ENCODE measurements at regions of chr5 and their contacts with region 1.

Region 1: GRCh38 chr5:146049014-146049703 is 56.2 kb downstream of the PLAC8L1 start:
- DNase-seq: peak; percentile 91
- H3K4me3 Mint-ChIP-seq: no peak overlapping the region
- H3K27ac Mint-ChIP-seq: peak overlapping the region; percentile 4
- H3K4me1 Mint-ChIP-seq: peaks cover 31% of the 10 kb centered on the region
- H3K27me3 Mint-ChIP-seq: no peaks in the 10 kb centered on the region
- CTCF ChIP-seq: peak; percentile 90

Region 2: DNA sequence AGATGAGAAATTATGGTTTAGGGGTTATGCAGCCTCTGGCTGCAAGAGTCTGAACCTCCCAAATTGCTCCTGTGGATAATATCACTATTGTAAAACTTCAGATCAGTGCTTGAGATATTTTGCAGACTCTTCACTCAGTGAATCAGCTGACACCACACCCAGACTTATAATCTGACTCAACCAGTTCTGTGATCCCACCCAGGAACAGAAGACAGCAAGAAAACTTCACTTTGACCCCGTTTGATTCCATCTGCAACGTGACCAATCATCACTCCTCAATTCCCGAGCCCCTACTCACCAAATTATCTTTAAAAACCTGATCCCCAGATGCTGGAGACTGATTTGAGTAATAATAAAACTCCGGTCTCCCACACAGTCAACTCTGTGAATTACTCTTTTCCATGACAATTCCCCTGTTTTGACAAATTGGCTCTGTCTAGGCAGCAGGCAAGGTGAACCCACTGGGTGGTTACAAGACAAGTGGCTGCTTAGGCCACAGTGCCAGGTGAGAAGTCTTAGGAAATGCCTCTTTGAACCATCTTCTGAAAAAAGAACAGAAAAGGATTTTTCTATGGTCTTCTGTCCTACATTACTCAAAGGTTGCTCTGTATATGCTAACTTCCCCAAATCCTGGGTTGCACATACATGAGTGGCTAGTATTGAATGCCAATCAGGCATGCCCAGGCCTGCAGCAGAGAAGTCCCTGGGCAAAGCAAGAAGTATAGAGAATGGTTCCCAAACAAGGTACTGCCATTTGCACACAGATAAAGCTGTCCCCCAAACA is 802.0 kb before region 1 on chr5:
- CTCF ChIA-PET with region 1: no interaction called
- POLR2A ChIA-PET with region 1: no interaction called
- intact Hi-C with region 1: loop called (anchors 5 kb)
- DNase-seq: peak; percentile 70
- H3K4me3 Mint-ChIP-seq: no peak overlapping the region
- H3K27ac Mint-ChIP-seq: peak overlapping the region; percentile 78
- H3K4me1 Mint-ChIP-seq: peaks cover 42% of the 10 kb centered on the region
- H3K27me3 Mint-ChIP-seq: no peaks in the 10 kb centered on the region
- CTCF ChIP-seq: no peak

Region 3: GRCh38 chr5:145697251-145697990 is 351.7 kb before region 1 on chr5:
- CTCF ChIA-PET with region 1: interaction called, 5 read pairs
- POLR2A ChIA-PET with region 1: no interaction called
- intact Hi-C with region 1: loop called (anchors 1 kb)
- DNase-seq: peak; percentile 75
- H3K4me3 Mint-ChIP-seq: no peak overlapping the region
- H3K27ac Mint-ChIP-seq: no peak overlapping the region
- H3K4me1 Mint-ChIP-seq: no peaks in the 10 kb centered on the region
- H3K27me3 Mint-ChIP-seq: no peaks in the 10 kb centered on the region
- CTCF ChIP-seq: peak; percentile 68

Region 4: GRCh38 chr5:145908205-145908945 is 140.8 kb before region 1 on chr5:
- CTCF ChIA-PET with region 1: interaction called, 66 read pairs
- POLR2A ChIA-PET with region 1: interaction called, 4 read pairs
- intact Hi-C with region 1: loop called (anchors 1 kb)
- DNase-seq: peak; percentile 51
- H3K4me3 Mint-ChIP-seq: no peak overlapping the region
- H3K27ac Mint-ChIP-seq: no peak overlapping the region
- H3K4me1 Mint-ChIP-seq: peaks cover 5% of the 10 kb centered on the region
- H3K27me3 Mint-ChIP-seq: no peaks in the 10 kb centered on the region
- CTCF ChIP-seq: peak; percentile 62

Region 5: DNA sequence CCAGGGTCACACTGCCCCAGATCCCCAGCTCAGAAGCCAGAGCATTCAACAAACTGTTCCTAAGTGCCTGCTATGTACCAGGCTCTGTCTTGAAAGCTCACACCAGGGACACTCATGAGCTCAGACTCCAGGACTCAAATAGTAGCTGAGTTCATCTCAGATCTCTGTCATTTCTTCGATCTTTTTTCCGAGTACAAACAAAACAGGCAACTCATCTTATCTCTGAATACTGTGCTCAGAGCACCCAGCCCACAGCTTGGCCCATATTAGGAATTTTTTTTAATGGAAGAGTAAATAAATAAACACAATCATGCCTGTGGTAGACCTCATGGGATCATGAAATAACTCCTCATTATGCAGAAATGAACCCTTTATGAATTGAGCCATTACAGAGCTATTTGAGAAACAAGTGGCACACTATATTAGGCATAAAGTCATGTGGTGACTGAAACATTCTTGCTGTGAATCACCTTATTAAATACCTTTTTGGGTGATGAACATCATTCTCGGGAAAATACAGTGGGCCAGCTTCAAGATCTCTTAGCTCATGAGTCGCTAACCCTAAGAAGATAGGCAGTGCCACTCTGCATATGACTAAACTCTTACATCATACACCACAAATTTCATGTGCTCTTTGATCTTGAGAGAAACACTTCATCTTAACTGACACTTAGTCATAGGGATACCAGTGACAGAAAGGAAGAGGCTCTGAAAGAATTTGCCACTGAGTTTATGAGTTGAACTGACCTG is 102.9 kb before region 1 on chr5:
- CTCF ChIA-PET with region 1: interaction called, 16 read pairs
- POLR2A ChIA-PET with region 1: interaction called, 112 read pairs
- intact Hi-C with region 1: no loop called
- DNase-seq: peak; percentile 72
- H3K4me3 Mint-ChIP-seq: no peak overlapping the region
- H3K27ac Mint-ChIP-seq: peak overlapping the region; percentile 32
- H3K4me1 Mint-ChIP-seq: peaks cover 61% of the 10 kb centered on the region
- H3K27me3 Mint-ChIP-seq: no peaks in the 10 kb centered on the region
- CTCF ChIP-seq: no peak

Region 6: GRCh38 chr5:146072595-146072994 is 23.4 kb after region 1 on chr5:
- CTCF ChIA-PET with region 1: interaction called, 10 read pairs
- POLR2A ChIA-PET with region 1: no interaction called
- intact Hi-C with region 1: no loop called
- DNase-seq: no peak
- H3K4me3 Mint-ChIP-seq: no peak overlapping the region
- H3K27ac Mint-ChIP-seq: peak overlapping the region; percentile 58
- H3K4me1 Mint-ChIP-seq: peaks cover 13% of the 10 kb centered on the region
- H3K27me3 Mint-ChIP-seq: no peaks in the 10 kb centered on the region
- CTCF ChIP-seq: no peak

Region 7: DNA sequence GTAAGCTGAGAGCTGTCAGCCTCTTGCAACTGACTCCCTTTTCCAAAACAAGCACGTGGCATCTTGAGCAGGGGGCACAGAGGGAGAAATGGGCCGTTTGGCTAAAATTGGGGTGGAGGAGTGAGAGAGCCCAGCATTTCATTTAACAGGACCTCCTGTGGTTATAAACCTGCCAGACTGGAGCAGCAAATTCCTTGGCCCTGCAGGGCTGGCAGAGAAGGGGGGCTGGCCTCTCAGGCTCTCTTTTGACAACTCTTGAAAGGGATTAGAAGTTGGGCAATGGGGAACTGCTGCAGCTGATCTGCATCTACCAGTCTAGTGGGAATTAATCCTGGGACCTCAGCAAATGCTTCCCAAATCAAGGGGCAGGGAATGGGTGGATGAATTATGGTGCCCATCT is 282.3 kb after region 1 on chr5:
- CTCF ChIA-PET with region 1: no interaction called
- POLR2A ChIA-PET with region 1: no interaction called
- intact Hi-C with region 1: no loop called
- DNase-seq: no peak
- H3K4me3 Mint-ChIP-seq: no peak overlapping the region
- H3K27ac Mint-ChIP-seq: no peak overlapping the region
- H3K4me1 Mint-ChIP-seq: peaks cover 6% of the 10 kb centered on the region
- H3K27me3 Mint-ChIP-seq: peaks cover 85% of the 10 kb centered on the region
- CTCF ChIP-seq: no peak

Region 8: DNA sequence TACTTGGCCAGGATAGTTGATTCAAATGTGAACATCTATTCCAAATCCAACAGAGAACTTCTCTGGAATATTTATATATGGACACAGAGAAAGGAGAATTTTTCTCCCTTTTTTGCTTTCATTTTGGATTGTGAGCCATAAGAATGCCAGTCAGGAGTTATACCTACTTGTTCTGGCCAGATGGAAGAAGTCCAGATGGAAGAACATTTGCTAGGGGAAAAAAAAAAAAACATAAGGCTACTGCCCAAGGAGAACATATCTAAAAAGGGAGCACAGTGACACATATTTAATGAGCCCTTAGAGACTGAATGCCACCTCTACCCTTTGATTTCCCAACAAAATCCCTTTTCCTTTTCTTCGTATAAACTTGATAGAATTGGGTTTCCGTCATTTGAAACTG is 891.1 kb after region 1 on chr5:
- CTCF ChIA-PET with region 1: no interaction called
- POLR2A ChIA-PET with region 1: no interaction called
- intact Hi-C with region 1: no loop called
- DNase-seq: no peak
- H3K4me3 Mint-ChIP-seq: no peak overlapping the region
- H3K27ac Mint-ChIP-seq: no peak overlapping the region
- H3K4me1 Mint-ChIP-seq: no peaks in the 10 kb centered on the region
- H3K27me3 Mint-ChIP-seq: no peaks in the 10 kb centered on the region
- CTCF ChIP-seq: no peak

Measured in MCF 10A (cell line).